ENCODE measurements at regions of chr6 and their contacts with region 1.

Region 1: DNA sequence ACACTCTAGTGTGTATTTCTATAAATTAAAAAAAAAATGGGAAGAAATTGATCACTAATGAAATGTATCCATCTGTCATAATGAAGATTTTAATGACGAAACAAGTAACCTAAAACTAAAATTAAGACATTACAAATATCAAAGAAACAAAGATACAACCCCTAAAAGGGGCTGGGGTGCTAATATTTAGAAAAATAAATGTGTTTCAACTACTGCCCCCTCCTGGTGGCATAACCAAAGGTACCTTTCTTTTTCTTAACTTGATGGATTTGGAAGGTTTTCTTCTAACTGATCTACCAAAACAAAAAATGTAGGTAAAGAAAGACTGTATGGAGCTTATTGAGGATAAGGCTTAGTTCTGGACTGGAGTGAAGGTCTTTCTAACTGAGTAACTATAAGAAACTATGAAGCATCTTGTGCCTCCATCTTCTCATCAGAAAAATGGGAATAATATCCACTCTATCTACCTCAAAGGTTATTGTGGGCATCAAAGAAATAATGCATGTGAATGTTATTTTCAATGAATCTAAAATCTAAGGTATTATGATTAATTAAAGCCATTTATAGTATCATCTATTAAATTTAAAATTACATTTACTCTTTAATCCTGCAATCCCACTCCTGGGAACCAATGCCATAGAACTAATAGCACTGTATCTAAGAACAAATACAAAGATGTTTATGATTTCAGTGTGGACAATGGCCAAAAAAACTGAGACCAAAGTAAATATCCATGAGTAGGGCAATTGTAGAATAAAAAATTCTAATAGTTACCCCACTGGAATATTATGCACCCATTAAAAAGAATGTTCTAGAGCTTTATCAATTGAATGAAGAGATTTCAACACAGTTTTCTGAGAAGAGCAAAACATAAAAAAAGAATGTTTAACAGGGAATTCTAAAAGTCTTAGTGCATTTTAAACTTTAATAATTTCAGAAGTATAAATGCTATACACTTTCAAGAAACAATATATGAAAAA is 117.2 kb downstream of the BACH2 start:
- DNase-seq: peak; percentile 56
- H3K4me3 Mint-ChIP-seq: no peak overlapping the region
- H3K27ac Mint-ChIP-seq: peak overlapping the region; percentile 85
- H3K4me1 Mint-ChIP-seq: peaks cover 81% of the 10 kb centered on the region
- H3K27me3 Mint-ChIP-seq: no peaks in the 10 kb centered on the region

Region 2: DNA sequence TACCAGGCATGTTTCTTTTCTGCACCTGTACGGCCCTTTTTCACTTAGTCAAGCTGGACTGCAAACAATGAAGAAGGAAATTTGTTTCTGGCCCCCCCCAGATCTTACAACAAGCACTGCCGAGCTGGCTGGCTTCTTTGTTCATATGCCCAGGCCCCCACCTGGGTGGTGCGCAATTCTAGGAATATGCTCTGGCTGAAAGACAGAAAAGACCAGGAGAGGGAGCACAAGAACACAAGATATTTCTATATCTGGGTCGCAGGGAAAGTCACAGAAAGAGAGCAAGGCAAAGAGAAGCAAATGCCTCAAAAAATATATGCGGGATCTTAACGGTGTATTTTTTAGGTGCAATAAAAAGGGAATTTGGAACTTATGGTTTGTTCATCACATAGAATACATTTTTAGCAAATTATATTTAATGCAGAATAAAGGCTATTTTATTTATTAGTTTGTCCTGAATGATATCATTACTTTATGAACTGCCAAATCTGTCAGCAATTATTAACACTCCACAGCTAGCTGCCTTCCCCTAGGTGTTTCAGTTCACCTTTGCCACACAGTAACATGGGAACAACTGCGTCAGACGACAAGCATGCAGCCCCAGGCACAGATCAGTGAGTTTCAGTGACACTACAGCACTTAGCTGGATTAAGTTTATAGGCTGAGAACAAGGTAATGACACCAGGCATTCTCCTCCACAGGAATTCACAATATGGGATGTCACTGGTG is 208.7 kb before region 1 on chr6:
- CTCF ChIA-PET with region 1: interaction called, 3 read pairs
- intact Hi-C with region 1: loop called (anchors 1 kb)
- DNase-seq: peak; percentile 36
- H3K4me3 Mint-ChIP-seq: no peak overlapping the region
- H3K27ac Mint-ChIP-seq: no peak overlapping the region
- H3K4me1 Mint-ChIP-seq: peaks cover 54% of the 10 kb centered on the region
- H3K27me3 Mint-ChIP-seq: no peaks in the 10 kb centered on the region

Region 3: GRCh38 chr6:90103056-90103800 is 76.3 kb before region 1 on chr6:
- CTCF ChIA-PET with region 1: interaction called, 5 read pairs
- intact Hi-C with region 1: loop called (anchors 1 kb)
- DNase-seq: peak; percentile 53
- H3K4me3 Mint-ChIP-seq: peak overlapping the region; percentile 45
- H3K27ac Mint-ChIP-seq: peak overlapping the region; percentile 79
- H3K4me1 Mint-ChIP-seq: peaks cover 93% of the 10 kb centered on the region
- H3K27me3 Mint-ChIP-seq: no peaks in the 10 kb centered on the region

Measured in activated naive CD4-positive, alpha-beta T cell treated with anti-CD3 and anti-CD28 coated beads for 36 hours (primary cell).